AG04449 (cell line): ENCODE measurements at regions of chr17 and their contacts with region 1.

Region 1: DNA sequence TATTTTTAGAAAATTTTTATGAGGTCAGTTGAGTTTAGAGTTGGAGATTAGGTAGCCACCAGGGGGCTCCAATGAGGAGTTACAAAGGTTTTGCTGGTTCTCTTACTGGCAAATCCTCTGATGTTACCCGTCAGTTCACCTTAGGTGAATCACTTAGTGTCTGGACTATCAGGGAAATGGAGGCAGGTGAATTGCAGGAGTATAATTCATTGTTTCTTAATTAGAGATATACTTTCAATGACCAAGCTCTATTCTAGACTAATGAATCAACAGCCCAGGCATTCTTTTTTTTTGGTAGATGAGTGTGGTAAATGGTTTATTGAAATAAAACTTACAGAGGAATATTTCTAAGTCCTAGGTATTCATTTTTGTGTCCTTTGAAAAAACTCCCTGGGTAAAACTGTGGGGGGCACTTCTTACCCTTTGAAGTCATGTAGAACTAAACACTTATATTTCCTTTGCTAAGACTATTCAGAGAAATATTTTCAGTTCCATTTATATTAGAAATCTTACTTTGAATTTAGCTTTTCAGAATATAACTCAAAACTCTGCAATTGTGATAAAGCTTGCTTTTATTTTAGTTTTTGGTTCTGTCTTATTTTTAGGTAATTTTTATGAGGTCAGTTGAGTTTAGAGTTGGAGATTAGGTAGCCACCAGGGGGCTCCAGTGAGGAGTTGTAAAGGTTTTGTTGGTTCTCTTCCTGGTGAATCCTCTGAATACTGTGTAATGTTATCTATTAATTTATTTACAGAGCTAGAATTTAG is 17.7 kb downstream of the PSMD11 start:
- DNase-seq: no peak
- H3K4me3 ChIP-seq: no peak overlapping the region
- CTCF ChIP-seq: peak; percentile 29

Region 2: GRCh38 chr17:32253117-32253611 is 208.9 kb before region 1 on chr17:
- CTCF ChIA-PET with region 1: interaction called, 30 read pairs
- POLR2A ChIA-PET with region 1: no interaction called
- DNase-seq: no peak
- H3K4me3 ChIP-seq: no peak overlapping the region
- CTCF ChIP-seq: peak; percentile 98

Region 3: GRCh38 chr17:32341857-32342602 is 120.0 kb before region 1 on chr17 and contains the start of gene C17orf75:
- CTCF ChIA-PET with region 1: no interaction called
- POLR2A ChIA-PET with region 1: no interaction called
- DNase-seq: no peak
- H3K4me3 ChIP-seq: peak within 1 kb of the TSS; percentile 72
- CTCF ChIP-seq: no peak

Region 4: GRCh38 chr17:32444308-32445073 is 17.5 kb before region 1 on chr17 and contains the start of gene PSMD11:
- CTCF ChIA-PET with region 1: interaction called, 247 read pairs
- POLR2A ChIA-PET with region 1: interaction called, 3 read pairs
- DNase-seq: peak; percentile 60
- H3K4me3 ChIP-seq: peak within 1 kb of the TSS; percentile 88
- CTCF ChIP-seq: peak; percentile 95

Region 5: GRCh38 chr17:32479074-32479617 is 17.1 kb after region 1 on chr17:
- CTCF ChIA-PET with region 1: interaction called, 160 read pairs
- POLR2A ChIA-PET with region 1: no interaction called
- DNase-seq: no peak
- H3K4me3 ChIP-seq: no peak overlapping the region
- CTCF ChIP-seq: no peak

Region 6: GRCh38 chr17:32486111-32486700 is 24.2 kb after region 1 on chr17:
- CTCF ChIA-PET with region 1: interaction called, 117 read pairs
- POLR2A ChIA-PET with region 1: no interaction called
- DNase-seq: no peak
- H3K4me3 ChIP-seq: peak overlapping the region; percentile 62
- CTCF ChIP-seq: no peak

Region 7: GRCh38 chr17:32755045-32755805 is 293.2 kb after region 1 on chr17:
- CTCF ChIA-PET with region 1: interaction called, 160 read pairs
- POLR2A ChIA-PET with region 1: no interaction called
- DNase-seq: peak; percentile 41
- H3K4me3 ChIP-seq: no peak overlapping the region
- CTCF ChIP-seq: peak; percentile 33

Region 8: DNA sequence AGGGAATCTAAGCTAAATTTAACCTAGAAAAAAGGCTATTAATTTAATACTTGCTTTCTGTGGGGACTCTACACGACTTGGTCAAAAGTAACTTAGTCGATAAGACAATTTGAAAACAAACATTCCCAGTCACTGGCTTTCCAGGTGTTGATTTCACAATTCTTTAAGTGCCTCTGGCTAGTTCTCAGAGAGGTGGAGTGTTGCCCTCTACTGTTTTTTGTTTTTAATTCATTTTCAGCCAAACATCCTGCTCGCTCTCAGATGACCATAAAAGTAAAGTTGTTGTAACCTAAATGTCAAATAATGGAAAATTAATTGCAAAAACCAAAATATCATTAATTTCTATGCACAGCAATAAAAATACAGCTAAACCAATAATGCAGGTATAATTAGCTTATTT is 307.8 kb after region 1 on chr17:
- CTCF ChIA-PET with region 1: interaction called, 10 read pairs
- POLR2A ChIA-PET with region 1: no interaction called
- DNase-seq: no peak
- H3K4me3 ChIP-seq: no peak overlapping the region
- CTCF ChIP-seq: no peak